Cardiac septum (tissue), 1 donor: ENCODE measurements at regions of chr3 and their contacts with region 1.

Region 1: GRCh38 chr3:113241292-113242095 is 30.1 kb downstream of the BOC start:
- DNase-seq: no peak

Region 2: DNA sequence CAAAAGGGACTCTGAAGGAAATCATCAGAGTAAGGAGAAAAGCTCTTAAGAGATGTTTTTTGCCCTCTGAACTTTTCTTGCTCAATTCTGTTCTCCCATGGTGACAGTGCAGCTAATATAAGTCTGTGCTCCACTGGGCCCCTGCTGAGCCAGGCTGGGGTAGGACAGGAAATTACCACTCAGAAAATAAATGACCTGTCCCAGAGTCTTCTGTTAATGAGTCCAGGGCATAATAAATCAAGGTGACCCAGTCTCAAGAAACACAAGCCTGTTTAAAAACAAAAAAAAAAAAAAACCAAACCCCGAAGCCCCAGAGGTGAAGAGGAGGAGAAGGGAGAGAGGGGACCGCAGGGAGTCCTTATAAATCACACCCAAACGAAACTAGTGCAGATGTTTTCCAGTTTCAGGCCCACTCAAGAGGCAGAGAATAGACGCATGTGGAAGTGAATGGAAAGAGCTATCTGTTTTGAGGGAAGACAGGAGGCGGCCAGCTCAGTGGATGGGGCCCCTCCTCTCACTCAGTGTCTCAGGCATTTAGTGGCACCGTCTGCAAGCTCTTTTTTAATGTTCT is 89.9 kb before region 1 on chr3:
- intact Hi-C with region 1: loop called (anchors 5 kb)
- DNase-seq: no peak

Region 3: GRCh38 chr3:113354307-113354706 is 112.8 kb after region 1 on chr3:
- intact Hi-C with region 1: no loop called
- DNase-seq: no peak